GM10248 (cell line): ENCODE measurements at regions of chr1 and their contacts with region 1.

Region 1: DNA sequence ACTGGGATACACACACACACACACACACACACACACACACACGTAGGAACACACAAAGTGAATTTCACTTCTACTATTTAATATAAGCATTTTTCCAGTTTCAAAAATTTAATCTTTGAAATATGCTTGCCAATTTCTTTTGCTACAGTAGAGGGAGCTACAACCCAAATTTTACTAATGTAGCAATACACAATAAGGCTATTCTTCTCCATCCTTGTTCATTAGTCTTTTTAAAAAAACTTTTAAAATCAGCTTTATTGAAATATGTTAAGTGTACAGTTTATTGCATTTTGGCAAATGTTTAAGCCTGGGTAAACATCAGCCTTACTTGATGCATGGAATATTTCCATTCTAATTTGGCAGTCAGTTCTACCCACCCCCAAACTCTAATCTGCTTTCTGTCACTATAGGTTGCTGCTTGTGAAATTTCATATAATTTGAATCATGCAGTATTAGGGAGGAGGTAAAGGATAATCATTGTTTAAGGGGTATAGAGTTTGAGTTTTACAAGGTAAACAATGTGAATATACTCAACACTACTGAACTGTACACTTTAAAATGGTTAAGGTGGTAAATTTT is 93.0 kb upstream of the TENT5C start:
- DNase-seq: no peak
- CTCF ChIP-seq: peak; percentile 51

Region 2: GRCh38 chr1:117501281-117501680 is 11.6 kb before region 1 on chr1:
- CTCF ChIA-PET with region 1: interaction called, 12 read pairs
- POLR2A ChIA-PET with region 1: no interaction called
- DNase-seq: no peak
- CTCF ChIP-seq: no peak

Region 3: DNA sequence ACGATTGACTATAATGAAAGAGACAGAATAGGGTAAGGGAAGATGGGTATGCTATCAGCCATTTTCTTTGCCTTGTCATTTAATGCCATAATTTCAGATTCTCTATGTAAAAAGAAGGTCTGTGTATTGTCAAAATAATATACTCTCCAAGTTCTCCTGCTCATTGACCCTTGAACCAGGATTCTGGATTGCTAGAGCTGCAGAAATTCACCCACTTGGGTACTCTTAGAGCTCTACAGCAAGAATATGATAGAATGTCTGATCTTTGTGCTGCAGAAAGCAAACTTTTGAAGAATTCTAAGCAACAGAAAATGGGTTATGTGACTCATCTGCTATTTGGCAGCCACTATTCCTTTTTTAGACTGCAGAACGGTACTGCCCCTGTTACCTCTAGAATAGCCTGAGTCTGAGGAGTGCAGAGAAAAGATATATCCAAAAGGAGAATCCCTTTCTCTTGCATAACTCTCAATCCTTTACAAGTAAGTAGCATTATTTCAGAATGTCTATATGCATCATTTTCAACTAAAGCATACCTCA is 14.8 kb after region 1 on chr1:
- CTCF ChIA-PET with region 1: interaction called, 47 read pairs
- POLR2A ChIA-PET with region 1: no interaction called
- DNase-seq: no peak
- CTCF ChIP-seq: no peak

Region 4: DNA sequence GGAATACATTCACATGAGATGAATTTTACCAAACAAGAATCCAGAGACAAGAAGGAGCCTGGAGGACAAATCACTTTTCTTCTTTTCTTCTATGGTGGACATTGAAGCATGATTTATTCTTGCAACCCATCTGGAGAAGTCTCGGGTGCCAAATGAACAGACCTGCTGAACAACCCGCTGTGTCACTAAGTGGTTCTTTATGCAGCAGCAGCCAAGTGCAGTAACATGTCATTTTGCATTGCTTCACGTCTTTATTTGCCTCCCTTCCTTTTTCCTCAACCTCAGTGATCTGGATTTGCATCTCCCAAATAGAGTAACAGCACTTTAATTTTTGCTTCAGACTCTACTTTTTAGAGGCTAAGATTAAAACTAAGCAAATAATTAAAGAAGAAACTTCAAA is 43.0 kb after region 1 on chr1:
- CTCF ChIA-PET with region 1: no interaction called
- POLR2A ChIA-PET with region 1: no interaction called
- DNase-seq: no peak
- CTCF ChIP-seq: no peak